Activated CD8-positive, alpha-beta T cell treated with anti-CD3 and anti-CD28 coated beads, Interleukin-2, amount 10 ng/mL, durations not matched to agents 7 days and 5 days (primary cell): ENCODE measurements at regions of chr7 and their contacts with region 1.

Region 1: DNA sequence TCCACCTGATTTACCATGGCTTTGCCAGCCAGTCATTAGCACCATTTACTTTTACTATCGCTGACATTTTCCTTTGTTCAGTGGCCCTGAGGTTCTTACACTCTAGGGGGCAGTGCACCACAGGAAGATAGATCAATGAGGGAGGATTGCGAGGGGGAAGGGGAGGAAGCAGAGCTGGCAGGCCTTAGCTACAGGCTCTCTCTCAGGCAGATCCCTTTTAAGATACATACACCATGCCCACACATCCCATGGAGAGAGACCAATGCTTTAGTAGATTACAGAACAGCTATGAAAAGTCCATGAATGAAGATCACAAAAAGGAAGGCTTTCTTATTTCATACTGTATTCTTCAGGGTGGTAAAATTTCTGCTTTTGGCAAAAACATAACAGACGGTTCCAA is 47.4 kb downstream of the DENND11 start:
- DNase-seq: peak; percentile 78
- ATAC-seq: peak; percentile 89
- H3K4me3 Mint-ChIP-seq: no peak overlapping the region
- H3K27ac Mint-ChIP-seq: peak overlapping the region; percentile 17
- H3K4me1 Mint-ChIP-seq: peaks cover 6% of the 10 kb centered on the region
- H3K27me3 Mint-ChIP-seq: no peaks in the 10 kb centered on the region

Region 2: DNA sequence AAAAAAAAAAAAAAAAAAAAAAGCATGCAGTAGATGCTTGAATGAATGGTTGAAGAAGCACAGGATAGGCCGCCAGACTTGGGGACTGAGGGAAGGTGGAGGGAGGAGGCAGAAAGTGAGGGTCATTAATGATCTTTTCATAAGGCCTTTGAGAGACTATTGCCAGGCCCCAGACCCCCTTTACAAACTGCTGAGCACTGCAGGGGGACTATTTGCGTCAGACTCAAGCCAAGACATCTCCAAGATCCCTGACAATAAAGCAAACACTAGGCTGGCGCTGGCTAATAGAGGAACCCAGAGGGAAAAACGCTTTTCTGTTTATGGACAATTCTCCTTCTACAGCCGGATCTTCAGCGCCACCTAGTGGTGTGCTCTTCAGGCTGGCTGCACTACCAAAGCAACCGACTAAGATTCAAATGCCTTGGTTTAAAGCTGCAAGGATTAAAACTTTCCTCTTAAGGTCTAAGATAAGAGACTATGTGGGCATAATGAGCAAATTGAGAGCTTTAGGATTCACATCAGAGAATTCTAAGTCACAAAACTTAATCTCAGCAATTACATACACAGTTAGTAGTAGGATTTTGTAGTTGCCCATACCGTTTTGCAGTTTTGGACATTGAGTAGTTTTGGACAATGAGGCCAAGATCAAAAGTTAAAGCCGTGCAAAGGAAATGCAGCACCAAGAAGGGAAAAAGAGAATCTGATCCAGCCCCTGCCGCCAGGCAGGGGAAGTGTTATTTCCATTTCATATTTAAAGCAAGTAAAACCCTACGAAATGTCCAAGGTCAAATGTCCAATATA is 121.2 kb before region 1 on chr7:
- CTCF ChIA-PET with region 1: interaction called, 12 read pairs
- POLR2A ChIA-PET with region 1: no interaction called
- DNase-seq: peak; percentile 68
- ATAC-seq: peak; percentile 51
- H3K4me3 Mint-ChIP-seq: no peak overlapping the region
- H3K27ac Mint-ChIP-seq: no peak overlapping the region
- H3K4me1 Mint-ChIP-seq: no peaks in the 10 kb centered on the region
- H3K27me3 Mint-ChIP-seq: peaks cover 20% of the 10 kb centered on the region

Region 3: DNA sequence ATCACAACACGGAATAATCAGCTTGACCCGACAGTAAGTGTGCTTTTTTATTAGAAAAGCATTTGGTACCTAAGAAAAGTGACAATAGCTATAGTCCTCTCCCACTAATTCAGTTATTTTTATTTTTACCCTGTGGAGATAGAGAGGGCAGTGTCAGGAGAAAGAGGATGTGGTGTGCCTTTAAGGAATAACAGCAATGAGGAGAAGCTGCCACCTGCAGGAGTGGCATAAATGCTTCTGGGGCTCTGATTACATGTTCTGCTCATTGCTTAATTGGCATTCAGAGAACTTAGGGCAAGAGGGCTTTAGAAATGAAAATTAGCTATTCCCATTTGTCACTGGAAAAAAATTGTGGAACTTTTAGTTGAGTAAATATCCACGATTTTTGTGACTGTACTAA is 12.7 kb before region 1 on chr7:
- CTCF ChIA-PET with region 1: interaction called, 20 read pairs
- POLR2A ChIA-PET with region 1: no interaction called
- DNase-seq: no peak
- ATAC-seq: no peak
- H3K4me3 Mint-ChIP-seq: no peak overlapping the region
- H3K27ac Mint-ChIP-seq: no peak overlapping the region
- H3K4me1 Mint-ChIP-seq: no peaks in the 10 kb centered on the region
- H3K27me3 Mint-ChIP-seq: no peaks in the 10 kb centered on the region

Region 4: GRCh38 chr7:141674702-141675101 is 20.2 kb after region 1 on chr7:
- CTCF ChIA-PET with region 1: interaction called, 41 read pairs
- POLR2A ChIA-PET with region 1: no interaction called
- DNase-seq: no peak
- ATAC-seq: peak; percentile 60
- H3K4me3 Mint-ChIP-seq: no peak overlapping the region
- H3K27ac Mint-ChIP-seq: no peak overlapping the region
- H3K4me1 Mint-ChIP-seq: peaks cover 18% of the 10 kb centered on the region
- H3K27me3 Mint-ChIP-seq: no peaks in the 10 kb centered on the region

Region 5: DNA sequence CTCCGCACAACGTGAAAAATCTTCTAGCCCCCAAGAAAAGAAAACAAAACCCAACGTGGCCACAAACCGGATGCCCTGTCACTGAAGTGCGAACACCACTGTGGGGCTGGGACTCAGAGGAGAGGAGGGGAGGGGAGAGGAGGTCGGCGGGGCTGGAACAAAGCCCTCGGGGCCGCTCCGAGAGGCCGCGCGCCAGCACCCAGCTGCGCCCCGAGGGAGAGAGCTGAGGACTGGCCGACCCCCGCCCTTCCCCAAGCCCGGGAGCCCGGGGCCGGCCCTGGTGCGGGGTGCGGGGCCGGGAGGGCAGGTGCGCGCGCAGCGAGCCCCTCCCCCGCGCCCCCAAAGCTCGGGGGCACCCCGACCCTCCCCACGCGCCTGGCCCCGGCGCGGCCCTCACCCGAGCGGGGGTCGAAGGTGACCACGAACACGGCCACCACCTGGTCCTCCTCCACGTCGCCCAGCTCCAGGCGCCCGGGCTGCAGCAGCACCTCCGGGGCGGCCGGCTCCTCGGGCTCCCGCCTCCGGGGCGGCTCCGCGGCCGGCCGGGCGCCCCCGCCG is 47.0 kb after region 1 on chr7:
- CTCF ChIA-PET with region 1: interaction called, 25 read pairs
- POLR2A ChIA-PET with region 1: interaction called, 3 read pairs
- DNase-seq: peak; percentile 86
- ATAC-seq: peak; percentile 90
- H3K4me3 Mint-ChIP-seq: peak overlapping the region; percentile 81
- H3K27ac Mint-ChIP-seq: peak overlapping the region; percentile 84
- H3K4me1 Mint-ChIP-seq: peaks cover 34% of the 10 kb centered on the region
- H3K27me3 Mint-ChIP-seq: peaks cover 20% of the 10 kb centered on the region

Region 6: DNA sequence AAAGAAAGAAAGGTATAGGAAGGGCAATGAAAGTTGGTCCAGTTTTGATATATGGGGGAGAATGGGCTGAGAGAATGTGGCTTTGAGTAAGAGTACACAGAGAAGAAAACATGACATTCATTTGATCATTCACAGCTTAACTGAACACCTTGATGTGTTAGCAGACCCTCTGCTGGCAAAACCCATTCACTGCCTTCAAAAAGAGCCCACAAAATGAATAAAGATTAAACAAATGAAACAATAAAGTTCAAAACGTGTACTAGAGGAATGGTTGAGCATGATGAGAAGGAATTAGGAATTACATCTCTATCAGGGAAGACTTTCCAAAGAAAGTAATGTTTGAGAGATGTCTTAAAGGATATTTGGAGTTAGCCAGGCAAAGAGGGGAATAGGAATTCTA is 55.8 kb after region 1 on chr7:
- CTCF ChIA-PET with region 1: interaction called, 16 read pairs
- POLR2A ChIA-PET with region 1: interaction called, 3 read pairs
- DNase-seq: no peak
- ATAC-seq: no peak
- H3K4me3 Mint-ChIP-seq: no peak overlapping the region
- H3K27ac Mint-ChIP-seq: no peak overlapping the region
- H3K4me1 Mint-ChIP-seq: peaks cover 7% of the 10 kb centered on the region
- H3K27me3 Mint-ChIP-seq: peaks cover 9% of the 10 kb centered on the region

Region 7: DNA sequence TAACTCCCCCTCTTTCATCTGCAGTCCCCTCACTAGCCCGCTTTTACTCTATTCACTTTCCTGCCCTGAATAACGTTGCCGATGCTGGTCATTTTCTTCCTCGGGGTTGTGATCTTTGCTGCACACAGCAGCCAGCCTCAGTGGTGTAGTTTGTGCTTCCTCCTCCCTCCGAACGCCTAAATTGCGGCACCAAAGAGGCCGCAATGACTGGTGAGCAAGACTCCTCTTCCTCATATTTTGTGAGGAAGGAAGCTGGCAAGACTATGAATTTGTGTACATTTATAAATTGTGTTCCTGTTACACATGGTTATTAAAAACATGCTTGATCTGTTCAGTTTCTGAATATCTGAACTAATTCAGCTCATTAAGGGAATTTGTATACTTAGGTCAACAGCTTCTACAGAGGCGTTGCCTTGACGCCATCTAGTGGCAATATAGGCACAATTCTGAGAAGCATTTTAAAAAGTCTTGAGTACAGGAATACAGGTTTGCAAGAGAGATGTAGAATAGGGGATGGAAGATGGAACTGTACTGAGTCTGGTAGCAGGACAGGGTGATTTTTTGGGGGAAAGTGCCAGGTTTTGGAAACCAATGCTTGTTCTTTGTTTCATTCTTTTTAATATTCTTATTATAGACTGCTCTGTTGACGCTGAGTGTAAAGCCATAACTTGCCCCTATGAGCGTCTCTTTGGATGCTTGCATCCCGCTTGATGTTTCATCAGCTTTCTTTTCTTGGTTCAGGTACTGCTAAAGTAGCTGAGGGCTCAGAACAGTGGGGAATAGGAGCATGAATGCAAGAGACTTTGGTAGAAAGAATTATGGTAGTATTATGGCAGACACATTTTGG is 131.4 kb after region 1 on chr7:
- CTCF ChIA-PET with region 1: interaction called, 65 read pairs
- POLR2A ChIA-PET with region 1: no interaction called
- DNase-seq: peak; percentile 45
- ATAC-seq: peak; percentile 61
- H3K4me3 Mint-ChIP-seq: no peak overlapping the region
- H3K27ac Mint-ChIP-seq: no peak overlapping the region
- H3K4me1 Mint-ChIP-seq: no peaks in the 10 kb centered on the region
- H3K27me3 Mint-ChIP-seq: no peaks in the 10 kb centered on the region